ENCODE measurements at regions of chr13 and their contacts with region 1.

Region 1: GRCh38 chr13:37074703-37075102 is 15.2 kb upstream of the SUPT20H start:
- DNase-seq: no peak
- H3K4me3 Mint-ChIP-seq: no peak overlapping the region
- H3K27ac Mint-ChIP-seq: no peak overlapping the region
- H3K4me1 Mint-ChIP-seq: no peaks in the 10 kb centered on the region
- H3K27me3 Mint-ChIP-seq: peaks cover 11% of the 10 kb centered on the region

Region 2: GRCh38 chr13:37029617-37030016 is 45.1 kb before region 1 on chr13:
- intact Hi-C with region 1: no loop called
- DNase-seq: no peak
- H3K4me3 Mint-ChIP-seq: no peak overlapping the region
- H3K27ac Mint-ChIP-seq: no peak overlapping the region
- H3K4me1 Mint-ChIP-seq: no peaks in the 10 kb centered on the region
- H3K27me3 Mint-ChIP-seq: no peaks in the 10 kb centered on the region

Region 3: DNA sequence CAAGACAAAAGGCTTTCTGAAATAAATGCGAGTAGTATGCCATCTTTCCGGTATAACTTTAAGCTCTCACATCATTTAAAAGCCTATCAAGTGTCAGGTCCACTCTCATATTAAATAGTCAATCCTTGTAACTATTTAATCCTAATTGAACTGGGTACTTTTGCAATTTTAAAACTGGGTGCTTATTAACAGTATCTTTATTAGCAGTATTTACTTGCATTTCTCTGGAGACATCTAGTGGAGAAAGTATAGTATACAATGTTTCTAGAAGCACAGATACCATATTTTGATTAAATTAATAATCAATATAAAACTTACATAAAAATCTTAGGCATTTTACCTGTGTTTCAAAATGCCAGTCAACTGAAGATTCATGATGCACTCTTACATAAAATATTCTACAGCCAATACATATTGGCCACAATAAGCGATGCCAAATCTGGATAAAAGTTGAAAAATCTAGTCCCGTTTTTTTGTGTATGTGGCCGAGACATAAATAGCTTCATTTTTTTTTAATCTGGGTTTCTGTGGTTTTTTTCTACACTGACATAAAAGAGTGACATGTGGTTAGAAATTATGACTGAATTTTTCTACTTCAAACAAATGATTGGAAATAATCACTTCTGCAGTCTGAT is 528.2 kb after region 1 on chr13:
- intact Hi-C with region 1: loop called (anchors 10 kb)
- DNase-seq: no peak
- H3K4me3 Mint-ChIP-seq: no peak overlapping the region
- H3K27ac Mint-ChIP-seq: no peak overlapping the region
- H3K4me1 Mint-ChIP-seq: no peaks in the 10 kb centered on the region
- H3K27me3 Mint-ChIP-seq: no peaks in the 10 kb centered on the region

Region 4: GRCh38 chr13:38914070-38914469 is 1839.4 kb after region 1 on chr13:
- intact Hi-C with region 1: loop called (anchors 5 kb)
- DNase-seq: no peak
- H3K4me3 Mint-ChIP-seq: no peak overlapping the region
- H3K27ac Mint-ChIP-seq: no peak overlapping the region
- H3K4me1 Mint-ChIP-seq: no peaks in the 10 kb centered on the region
- H3K27me3 Mint-ChIP-seq: no peaks in the 10 kb centered on the region